ENCODE measurements at regions of chr22 and their contacts with region 1.

Region 1: GRCh38 chr22:32050678-32051515 is 7.8 kb downstream of the SLC5A1 start:
- DNase-seq: peak; percentile 83 to 96
- H3K4me3 ChIP-seq: no peak overlapping the region
- H3K27ac ChIP-seq: peak overlapping the region; percentile 85
- H3K4me1 ChIP-seq: peaks cover 21% of the 10 kb centered on the region
- H3K27me3 ChIP-seq: no peaks in the 10 kb centered on the region
- CTCF ChIP-seq: no peak

Region 2: DNA sequence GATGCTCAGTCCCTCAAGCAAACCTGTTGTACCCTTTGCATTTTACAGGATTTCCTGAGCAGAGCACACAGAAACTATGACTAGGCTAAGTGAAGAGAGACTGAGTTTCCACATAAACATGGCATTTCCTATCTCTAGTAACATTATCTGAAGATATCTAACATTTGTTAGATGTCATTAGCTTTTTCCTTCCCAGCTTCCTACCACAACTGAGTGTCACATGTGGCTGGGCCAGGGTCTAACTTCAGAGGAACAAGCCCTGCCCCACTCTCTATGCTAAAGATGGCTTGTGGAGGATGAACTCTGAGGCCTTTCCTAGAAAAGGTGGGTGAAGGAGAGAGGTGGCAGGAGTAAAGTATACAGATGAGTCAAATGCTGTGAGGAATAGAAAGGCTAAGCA is 91.7 kb after region 1 on chr22:
- CTCF ChIA-PET with region 1: no interaction called
- POLR2A ChIA-PET with region 1: no interaction called
- intact Hi-C with region 1: loop called (anchors 2 kb)
- DNase-seq: no peak
- H3K4me3 ChIP-seq: no peak overlapping the region
- H3K27ac ChIP-seq: no peak overlapping the region
- H3K4me1 ChIP-seq: peaks cover 16% of the 10 kb centered on the region; the same call in 1 of the 2 replicates
- H3K27me3 ChIP-seq: peaks cover 16% of the 10 kb centered on the region; the same call in 1 of the 2 replicates
- CTCF ChIP-seq: no peak

Region 3: DNA sequence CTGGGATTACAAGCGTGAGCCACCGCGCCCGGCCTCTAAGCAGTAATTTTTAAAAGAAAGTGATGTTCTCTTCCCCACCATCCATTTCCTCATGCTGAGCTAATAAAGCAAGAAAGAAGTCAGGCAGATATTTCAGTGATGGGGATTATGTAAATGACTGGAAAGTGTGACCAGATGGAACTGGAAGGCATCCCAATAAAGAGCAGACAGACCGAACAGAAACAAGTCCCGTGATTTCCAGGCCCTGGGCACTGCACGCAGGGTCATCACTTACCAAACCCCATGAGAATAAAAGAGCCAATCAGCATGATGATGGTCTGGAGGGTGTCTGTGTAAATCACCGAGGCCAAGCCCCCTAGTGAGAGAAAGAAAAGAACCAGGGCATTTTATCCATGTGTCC is 186.1 kb after region 1 on chr22:
- CTCF ChIA-PET with region 1: no interaction called
- POLR2A ChIA-PET with region 1: no interaction called
- intact Hi-C with region 1: no loop called
- DNase-seq: no peak
- H3K4me3 ChIP-seq: no peak overlapping the region
- H3K27ac ChIP-seq: no peak overlapping the region
- H3K4me1 ChIP-seq: no peaks in the 10 kb centered on the region
- H3K27me3 ChIP-seq: peaks cover 72% of the 10 kb centered on the region
- CTCF ChIP-seq: no peak

Region 4: GRCh38 chr22:32444068-32444467 is 393.2 kb after region 1 on chr22:
- CTCF ChIA-PET with region 1: interaction called, 14 read pairs
- POLR2A ChIA-PET with region 1: no interaction called
- intact Hi-C with region 1: no loop called
- DNase-seq: peak; percentile 25 to 51
- H3K4me3 ChIP-seq: no peak overlapping the region
- H3K27ac ChIP-seq: no peak overlapping the region
- H3K4me1 ChIP-seq: 0 out of 2 replicates have a peak, but pooled peaks cover under 1% of the 10 kb centered on the region
- H3K27me3 ChIP-seq: peaks cover 78% of the 10 kb centered on the region
- CTCF ChIP-seq: peak; percentile 70